ENCODE measurements at regions of chr5 and their contacts with region 1.

Region 1: GRCh38 chr5:159106569-159107282 is 7.0 kb upstream of the EBF1 start:
- DNase-seq: peak; percentile 59 to 76
- H3K4me3 ChIP-seq: no peak overlapping the region
- H3K4me3 Mint-ChIP-seq: peak overlapping the region; percentile 20
- H3K27ac Mint-ChIP-seq: no peak overlapping the region
- H3K4me1 ChIP-seq: no peaks in the 10 kb centered on the region
- H3K4me1 Mint-ChIP-seq: peaks cover 7% of the 10 kb centered on the region
- H3K27me3 ChIP-seq: no peaks in the 10 kb centered on the region; the same call in 1 of the 2 replicates
- H3K27me3 Mint-ChIP-seq: peaks cover 41% of the 10 kb centered on the region
- CTCF ChIP-seq: peak; percentile 83 to 86

Region 2: GRCh38 chr5:158013939-158014338 is 1092.8 kb before region 1 on chr5:
- CTCF ChIA-PET with region 1: no interaction called
- POLR2A ChIA-PET with region 1: no interaction called
- intact Hi-C with region 1: loop called (anchors 1 kb)
- DNase-seq: peak; percentile 40 to 50
- H3K4me3 ChIP-seq: no peak overlapping the region
- H3K4me3 Mint-ChIP-seq: no peak overlapping the region
- H3K27ac Mint-ChIP-seq: no peak overlapping the region
- H3K4me1 ChIP-seq: peaks cover 8% of the 10 kb centered on the region; the same call in 1 of the 2 replicates
- H3K4me1 Mint-ChIP-seq: no peaks in the 10 kb centered on the region
- H3K27me3 ChIP-seq: no peaks in the 10 kb centered on the region
- H3K27me3 Mint-ChIP-seq: no peaks in the 10 kb centered on the region
- CTCF ChIP-seq: peak; percentile 45 to 47

Region 3: DNA sequence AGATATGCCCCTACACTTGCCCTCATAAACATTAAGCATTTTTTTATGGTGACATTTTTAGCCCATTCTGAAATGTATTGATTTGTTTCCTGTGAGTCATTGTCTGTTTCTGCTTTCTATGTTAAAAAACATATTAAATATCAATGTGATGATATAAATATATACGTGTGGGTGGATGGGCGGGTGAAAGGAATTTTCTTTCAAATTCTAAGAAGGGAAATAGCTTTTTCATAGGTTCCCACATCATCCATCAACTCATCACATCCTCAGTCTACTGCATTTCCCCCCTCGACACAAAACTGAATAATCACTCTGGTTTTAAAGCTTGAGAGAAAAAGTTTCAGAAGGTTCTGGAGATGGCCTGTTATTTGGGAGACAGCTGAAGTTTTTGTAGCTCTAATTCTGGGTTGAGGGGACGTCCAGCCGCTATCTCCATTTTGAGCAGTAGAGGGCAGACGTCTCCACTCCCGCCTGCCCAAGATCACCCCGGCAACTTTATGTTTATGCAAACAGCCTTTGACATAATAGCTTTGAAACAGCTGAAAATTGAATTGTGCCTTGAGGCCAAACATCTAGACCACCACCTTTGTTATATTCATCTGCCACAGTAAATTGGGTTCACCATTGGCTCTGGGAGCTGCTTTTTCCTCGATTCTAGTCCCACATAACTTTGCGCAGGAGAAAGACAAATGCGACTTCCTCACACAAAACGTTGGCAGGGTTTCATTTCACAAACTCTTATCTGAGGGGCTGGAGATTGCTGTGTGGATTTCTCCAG is 1031.5 kb before region 1 on chr5:
- CTCF ChIA-PET with region 1: interaction called, 11 read pairs
- POLR2A ChIA-PET with region 1: no interaction called
- intact Hi-C with region 1: loop called (anchors 5 kb)
- DNase-seq: peak; percentile 41 to 75
- H3K4me3 ChIP-seq: no peak overlapping the region
- H3K4me3 Mint-ChIP-seq: no peak overlapping the region
- H3K27ac Mint-ChIP-seq: no peak overlapping the region
- H3K4me1 ChIP-seq: no peaks in the 10 kb centered on the region
- H3K4me1 Mint-ChIP-seq: no peaks in the 10 kb centered on the region
- H3K27me3 ChIP-seq: no peaks in the 10 kb centered on the region
- H3K27me3 Mint-ChIP-seq: peaks cover 9% of the 10 kb centered on the region
- CTCF ChIP-seq: peak; percentile 73 to 87

Region 4: DNA sequence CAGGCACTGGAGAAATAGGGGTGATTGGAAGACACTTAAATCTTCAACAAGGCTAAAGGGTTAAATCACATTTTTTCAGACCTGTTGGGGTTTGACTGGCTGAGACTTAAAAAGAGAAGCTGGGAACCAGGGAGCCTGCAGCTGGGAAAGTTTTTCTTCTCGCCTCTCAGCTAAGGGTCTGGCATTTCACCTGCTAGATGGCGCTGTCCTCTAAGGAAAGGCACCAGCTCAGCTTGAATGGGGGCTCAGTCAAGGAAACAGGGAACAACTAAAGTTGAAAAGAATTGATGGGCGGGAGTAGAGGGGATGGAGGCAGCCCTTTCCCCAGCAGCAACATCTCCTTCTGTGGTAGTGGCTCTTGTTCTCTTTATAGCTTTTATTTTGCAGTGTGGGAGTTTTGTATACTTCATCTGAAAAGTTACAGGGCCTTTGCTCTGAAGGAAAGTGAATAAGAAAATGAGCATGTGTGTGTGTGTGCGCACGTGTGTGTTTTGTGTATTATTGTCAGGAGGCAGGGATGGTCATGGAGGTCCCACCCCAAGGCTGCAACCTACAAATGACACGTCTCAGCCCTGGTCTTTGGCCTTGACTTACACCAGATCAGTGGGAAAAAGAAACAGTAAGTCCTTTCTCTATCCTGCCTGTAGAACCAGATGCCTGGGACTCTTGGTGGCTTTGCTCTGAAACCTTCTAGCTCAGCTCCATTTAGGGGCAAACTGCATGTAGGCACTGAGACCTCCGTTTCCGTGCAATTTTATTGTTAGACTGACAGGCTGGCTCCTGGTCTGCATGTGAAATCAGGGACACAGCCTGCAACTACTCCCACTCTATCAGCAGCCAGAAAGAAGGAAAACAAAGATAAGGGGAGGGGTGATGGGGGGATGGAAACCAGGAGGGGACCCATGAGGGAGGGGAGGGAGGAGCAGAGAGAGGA is 931.5 kb before region 1 on chr5:
- CTCF ChIA-PET with region 1: interaction called, 9 read pairs
- POLR2A ChIA-PET with region 1: no interaction called
- intact Hi-C with region 1: loop called (anchors 1 kb)
- DNase-seq: peak; percentile 67 to 69
- H3K4me3 ChIP-seq: no peak overlapping the region
- H3K4me3 Mint-ChIP-seq: no peak overlapping the region
- H3K27ac Mint-ChIP-seq: no peak overlapping the region
- H3K4me1 ChIP-seq: peaks cover 11% of the 10 kb centered on the region; the same call in 1 of the 2 replicates
- H3K4me1 Mint-ChIP-seq: no peaks in the 10 kb centered on the region
- H3K27me3 ChIP-seq: no peaks in the 10 kb centered on the region
- H3K27me3 Mint-ChIP-seq: peaks cover 7% of the 10 kb centered on the region
- CTCF ChIP-seq: peak; percentile 74 to 87

Region 5: DNA sequence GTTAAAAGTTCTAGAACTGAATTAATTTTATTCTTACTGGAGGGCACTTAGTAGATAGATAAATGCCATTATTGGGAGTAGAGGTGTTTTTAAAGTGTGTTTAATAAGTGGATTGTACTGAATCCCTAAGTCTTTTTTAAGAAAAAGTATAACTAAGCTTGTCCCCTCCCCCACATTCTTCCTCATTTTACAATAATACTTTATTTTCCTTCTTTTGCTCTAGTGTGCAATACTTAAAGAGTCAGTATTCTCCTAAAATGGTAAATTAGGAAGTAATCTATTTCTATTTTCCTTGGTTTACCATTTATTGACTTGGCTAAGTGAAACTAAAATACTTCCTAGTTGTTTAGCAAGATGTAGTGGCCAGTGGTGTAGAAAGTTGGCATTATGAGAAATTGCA is 167.9 kb after region 1 on chr5:
- CTCF ChIA-PET with region 1: no interaction called
- POLR2A ChIA-PET with region 1: no interaction called
- intact Hi-C with region 1: no loop called
- DNase-seq: no peak
- H3K4me3 ChIP-seq: no peak overlapping the region
- H3K4me3 Mint-ChIP-seq: no peak overlapping the region
- H3K27ac Mint-ChIP-seq: no peak overlapping the region
- H3K4me1 ChIP-seq: no peaks in the 10 kb centered on the region
- H3K4me1 Mint-ChIP-seq: no peaks in the 10 kb centered on the region
- H3K27me3 ChIP-seq: no peaks in the 10 kb centered on the region
- H3K27me3 Mint-ChIP-seq: no peaks in the 10 kb centered on the region
- CTCF ChIP-seq: no peak

Measured in Caco-2 (cell line).